PC-3 (cell line): ENCODE measurements at regions of chr3 and their contacts with region 1.

Region 1: GRCh38 chr3:141192345-141192744 is 39.3 kb upstream of the PXYLP1 start:
- DNase-seq: peak; percentile 94
- ATAC-seq: peak; percentile 99
- H3K4me3 ChIP-seq: no peak overlapping the region
- H3K27ac ChIP-seq: no peak overlapping the region
- H3K4me1 ChIP-seq: no peaks in the 10 kb centered on the region
- H3K27me3 ChIP-seq: peaks cover 39% of the 10 kb centered on the region
- CTCF ChIP-seq: peak; percentile 92

Region 2: DNA sequence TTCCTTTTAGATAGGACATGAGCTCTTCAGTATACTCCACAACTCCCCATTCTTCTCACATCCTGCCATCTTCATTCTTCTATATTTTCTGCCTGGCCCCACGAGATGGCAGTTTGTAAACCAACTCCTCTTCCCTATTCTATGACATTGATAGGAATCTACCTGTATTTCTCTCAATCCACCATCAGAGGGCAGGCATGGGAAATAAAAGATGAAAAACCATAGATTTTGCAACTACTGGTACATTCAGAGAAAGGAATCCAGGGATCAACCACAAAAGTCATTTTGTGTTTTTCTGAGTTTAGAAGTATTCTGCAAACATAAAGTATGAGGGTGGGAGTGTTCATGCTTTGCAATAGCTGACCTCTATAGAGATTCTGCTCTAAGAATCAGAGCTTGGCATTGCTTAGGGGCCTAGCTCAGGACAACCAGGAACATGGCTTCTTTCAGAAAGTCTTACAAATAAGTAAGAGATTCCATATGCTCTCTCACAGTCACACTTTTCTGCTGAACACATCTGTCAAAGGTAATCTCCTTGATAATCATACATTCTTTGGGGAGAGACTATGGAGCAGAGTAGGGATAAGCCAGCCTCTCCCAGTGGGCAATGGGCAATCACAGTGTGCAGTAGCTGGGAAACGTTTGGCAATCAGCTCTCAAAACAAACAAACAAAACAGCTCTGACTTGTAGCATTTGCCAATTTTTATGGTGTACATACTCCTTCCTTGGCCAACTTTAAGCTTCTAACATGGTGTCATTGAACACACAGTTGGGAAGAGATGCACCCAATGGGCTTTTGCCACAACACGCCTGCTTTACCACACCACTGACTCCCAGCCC is 293.8 kb before region 1 on chr3:
- CTCF ChIA-PET with region 1: no interaction called
- POLR2A ChIA-PET with region 1: no interaction called
- intact Hi-C with region 1: loop called (anchors 1 kb)
- DNase-seq: peak; percentile 65
- ATAC-seq: peak; percentile 76
- H3K4me3 ChIP-seq: no peak overlapping the region
- H3K27ac ChIP-seq: no peak overlapping the region
- H3K4me1 ChIP-seq: no peaks in the 10 kb centered on the region
- H3K27me3 ChIP-seq: 0 out of 2 replicates have a peak, but pooled peaks cover under 1% of the 10 kb centered on the region
- CTCF ChIP-seq: peak; percentile 65

Region 3: DNA sequence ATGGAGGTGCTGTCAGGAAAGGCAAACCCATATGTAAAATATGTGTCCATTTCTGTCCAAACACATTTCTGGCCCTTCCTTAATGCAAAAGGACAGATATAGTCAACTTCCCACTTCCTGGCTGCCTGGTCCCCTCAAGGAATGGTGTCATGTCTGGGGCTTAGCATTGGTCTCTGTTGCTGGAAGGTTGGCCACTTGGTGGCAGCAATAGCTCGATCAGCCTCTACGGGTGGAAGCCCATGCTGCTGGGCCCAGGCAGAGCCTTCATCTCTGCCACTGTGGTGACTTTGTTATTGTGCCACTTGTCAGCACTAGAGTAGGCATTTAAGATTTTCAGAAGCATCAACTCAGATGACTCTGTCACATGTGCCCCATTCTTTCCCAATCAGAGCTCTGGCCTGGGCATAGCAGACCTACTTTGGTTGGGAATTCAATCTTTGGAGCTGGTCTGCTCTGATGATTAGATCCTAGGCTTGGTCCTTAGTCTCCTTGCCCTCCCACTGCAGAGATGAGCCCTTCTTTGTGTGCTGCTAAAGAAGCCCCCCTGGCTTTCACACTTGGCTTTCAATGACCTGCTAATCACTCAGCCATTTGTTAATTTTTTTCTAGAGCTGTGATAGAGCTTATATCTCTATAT is 192.2 kb before region 1 on chr3:
- CTCF ChIA-PET with region 1: no interaction called
- POLR2A ChIA-PET with region 1: no interaction called
- intact Hi-C with region 1: loop called (anchors 1 kb)
- DNase-seq: peak; percentile 53
- ATAC-seq: peak; percentile 94
- H3K4me3 ChIP-seq: no peak overlapping the region
- H3K27ac ChIP-seq: no peak overlapping the region
- H3K4me1 ChIP-seq: no peaks in the 10 kb centered on the region
- H3K27me3 ChIP-seq: no peaks in the 10 kb centered on the region
- CTCF ChIP-seq: peak; percentile 74